A673 (cell line): ENCODE measurements at regions of chr9 and their contacts with region 1.

Region 1: DNA sequence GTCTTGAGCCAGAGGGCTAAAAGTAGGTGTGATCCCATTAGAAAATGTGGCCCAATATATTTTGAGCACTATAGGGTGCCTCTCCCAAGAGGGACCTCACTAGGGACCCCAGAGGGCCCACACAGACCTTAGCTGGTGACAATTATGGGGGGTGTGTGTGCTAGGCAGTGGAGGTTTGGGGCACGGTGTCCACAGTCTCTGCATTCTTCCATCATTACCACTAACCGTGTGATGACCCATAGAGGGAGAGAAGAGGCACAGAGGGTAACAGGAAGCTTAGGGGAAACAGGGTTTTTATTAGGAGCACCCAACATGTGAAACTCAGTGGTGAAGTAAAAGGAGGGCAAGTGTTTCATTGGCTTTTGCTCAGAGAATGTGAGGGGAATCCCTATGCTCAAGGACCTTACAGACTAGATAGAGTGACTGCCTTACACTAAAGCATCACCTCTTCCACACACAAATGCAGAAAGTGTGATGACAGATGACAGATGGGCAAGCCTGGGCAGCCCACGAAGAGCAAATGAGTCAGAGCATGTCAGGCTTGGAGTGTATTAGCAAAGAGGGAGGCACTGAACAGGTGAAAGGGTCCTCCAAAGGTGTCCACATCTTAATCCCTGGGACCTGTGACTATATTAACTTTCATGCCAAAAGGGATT is 2.5 kb upstream of the ACTL7A start:
- DNase-seq: no peak
- H3K4me3 ChIP-seq: no peak overlapping the region
- H3K27ac ChIP-seq: no peak overlapping the region
- H3K4me1 ChIP-seq: no peaks in the 10 kb centered on the region
- H3K27me3 ChIP-seq: no peaks in the 10 kb centered on the region
- CTCF ChIP-seq: no peak

Region 2: GRCh38 chr9:108876425-108876824 is 16.8 kb after region 1 on chr9:
- CTCF ChIA-PET with region 1: no interaction called
- POLR2A ChIA-PET with region 1: interaction called, 12 read pairs
- intact Hi-C with region 1: no loop called
- DNase-seq: no peak
- H3K4me3 ChIP-seq: no peak overlapping the region
- H3K27ac ChIP-seq: no peak overlapping the region
- H3K4me1 ChIP-seq: no peaks in the 10 kb centered on the region
- H3K27me3 ChIP-seq: no peaks in the 10 kb centered on the region
- CTCF ChIP-seq: no peak